H1 (cell line): ENCODE measurements at regions of chr15 and their contacts with region 1.

Region 1: GRCh38 chr15:71443538-71443937 is 328.3 kb downstream of the THSD4 start:
- DNase-seq: peak in 1 of 2 experiments; percentile 79
- H3K4me3 ChIP-seq: no peak overlapping the region
- H3K27ac ChIP-seq: no peak overlapping the region
- H3K4me1 ChIP-seq: peaks cover 0 to 6% (median 3%) of the 10 kb centered on the region in 4 experiments; a peak in 3 of 7 replicates
- H3K27me3 ChIP-seq: no peaks in the 10 kb centered on the region
- CTCF ChIP-seq: peak; percentile 59 to 66 (median 65)
- EP300 ChIP-seq: no peak
- POLR2A ChIP-seq: no peak
- RAD21 ChIP-seq: peak; percentile 49 to 62

Region 2: DNA sequence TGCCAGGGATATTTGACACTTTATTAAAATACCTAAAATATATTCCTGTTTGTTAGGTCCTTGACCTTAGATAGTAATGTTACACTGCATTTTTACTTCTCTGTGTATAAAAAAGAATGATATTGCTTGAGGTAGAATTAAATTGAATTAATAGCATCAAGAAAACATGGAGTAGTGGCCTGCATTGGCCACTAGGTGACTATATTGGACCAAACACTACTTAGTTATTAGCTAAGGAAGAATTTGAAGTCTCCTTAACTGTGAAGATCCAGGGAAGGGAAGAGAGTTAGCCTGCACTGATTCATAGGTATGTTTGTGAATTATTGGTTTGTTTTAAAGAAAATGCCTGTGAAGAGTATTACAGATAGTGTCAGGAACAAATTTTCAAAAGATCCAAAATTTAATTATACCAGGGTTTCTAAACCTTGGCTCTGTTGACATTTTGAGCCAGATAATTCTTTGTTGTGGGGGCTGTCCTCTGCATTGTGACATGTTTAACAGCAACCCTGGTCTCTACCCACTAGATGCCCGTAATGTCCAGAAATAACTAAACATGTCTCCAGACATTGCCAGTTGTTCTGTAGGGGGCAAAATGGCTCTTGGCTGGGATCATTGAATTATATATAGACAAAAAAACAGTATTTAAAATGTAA is 431.9 kb before region 1 on chr15:
- CTCF ChIA-PET with region 1: interaction called, 11 read pairs
- POLR2A ChIA-PET with region 1: no interaction called
- DNase-seq: no peak
- H3K4me3 ChIP-seq: no peak overlapping the region
- H3K27ac ChIP-seq: no peak overlapping the region
- H3K4me1 ChIP-seq: no peaks in the 10 kb centered on the region
- H3K27me3 ChIP-seq: no peaks in the 10 kb centered on the region
- CTCF ChIP-seq: peak in 2 of 3 experiments; percentile 53 to 73; a peak in 2 of 4 replicates
- EP300 ChIP-seq: no peak
- POLR2A ChIP-seq: no peak
- RAD21 ChIP-seq: peak; percentile 87 to 93

Region 3: GRCh38 chr15:71256934-71257664 is 186.4 kb before region 1 on chr15:
- CTCF ChIA-PET with region 1: interaction called, 11 read pairs
- POLR2A ChIA-PET with region 1: no interaction called
- DNase-seq: no peak
- H3K4me3 ChIP-seq: no peak overlapping the region
- H3K27ac ChIP-seq: no peak overlapping the region
- H3K4me1 ChIP-seq: peaks cover 0 to 2% (median under 1%) of the 10 kb centered on the region in 4 experiments; a peak in 2 of 7 replicates
- H3K27me3 ChIP-seq: no peaks in the 10 kb centered on the region; a peak in 1 of 7 replicates
- CTCF ChIP-seq: peak in 1 of 3 experiments; percentile 37; a peak in 1 of 4 replicates
- EP300 ChIP-seq: no peak
- POLR2A ChIP-seq: no peak
- RAD21 ChIP-seq: peak in 1 of 2 experiments; percentile 50; a peak in 2 of 4 replicates

Region 4: GRCh38 chr15:71400294-71400693 is 43.2 kb before region 1 on chr15:
- CTCF ChIA-PET with region 1: interaction called, 11 read pairs
- POLR2A ChIA-PET with region 1: no interaction called
- DNase-seq: no peak
- H3K4me3 ChIP-seq: no peak overlapping the region
- H3K27ac ChIP-seq: no peak overlapping the region
- H3K4me1 ChIP-seq: no peaks in the 10 kb centered on the region
- H3K27me3 ChIP-seq: no peaks in the 10 kb centered on the region
- CTCF ChIP-seq: no peak
- EP300 ChIP-seq: no peak
- POLR2A ChIP-seq: no peak
- RAD21 ChIP-seq: no peak

Region 5: GRCh38 chr15:71585159-71585558 is 141.6 kb after region 1 on chr15:
- CTCF ChIA-PET with region 1: no interaction called
- POLR2A ChIA-PET with region 1: no interaction called
- DNase-seq: no peak
- H3K4me3 ChIP-seq: no peak overlapping the region
- H3K27ac ChIP-seq: no peak overlapping the region
- H3K4me1 ChIP-seq: no peaks in the 10 kb centered on the region
- H3K27me3 ChIP-seq: no peaks in the 10 kb centered on the region
- CTCF ChIP-seq: no peak
- EP300 ChIP-seq: no peak
- POLR2A ChIP-seq: no peak
- RAD21 ChIP-seq: no peak